ENCODE measurements at regions of chr12 and their contacts with region 1.

Region 1: GRCh38 chr12:26853303-26854030 is 20.5 kb upstream of the ITPR2 start:
- DNase-seq: peak; percentile 83
- ATAC-seq: peak; percentile 95
- H3K4me3 ChIP-seq: no peak overlapping the region
- H3K27ac ChIP-seq: no peak overlapping the region
- H3K4me1 ChIP-seq: peaks cover 3% of the 10 kb centered on the region; the same call in 1 of the 2 replicates
- H3K27me3 ChIP-seq: no peaks in the 10 kb centered on the region
- CTCF ChIP-seq: peak; percentile 99

Region 2: GRCh38 chr12:26884765-26885576 is 31.5 kb after region 1 on chr12:
- CTCF ChIA-PET with region 1: interaction called, 6 read pairs
- POLR2A ChIA-PET with region 1: no interaction called
- intact Hi-C with region 1: loop called (anchors 1 kb)
- DNase-seq: peak; percentile 99
- ATAC-seq: peak; percentile 96
- H3K4me3 ChIP-seq: peak overlapping the region; percentile 42; the same call in 1 of the 2 replicates
- H3K27ac ChIP-seq: no peak overlapping the region
- H3K4me1 ChIP-seq: peaks cover 3% of the 10 kb centered on the region; the same call in 1 of the 2 replicates
- H3K27me3 ChIP-seq: no peaks in the 10 kb centered on the region
- CTCF ChIP-seq: peak; percentile 99

Measured in PC-3 (cell line).